Esophagus muscularis mucosa (tissue), 4 donors: ENCODE measurements at regions of chr1 and their contacts with region 1.

Region 1: GRCh38 chr1:221741711-221742554 is at the start of gene DUSP10:
- DNase-seq: peak; percentile 100
- H3K4me3 ChIP-seq: peak within 1 kb of the TSS; percentile 63 to 91 (median 70)
- H3K27ac ChIP-seq: peak within 1 kb of the TSS; percentile 93 to 99 (median 98)
- H3K4me1 ChIP-seq: peaks cover 20 to 50% (median 43%) of the 10 kb centered on the region in 4 donors
- H3K27me3 ChIP-seq: no peaks in the 10 kb centered on the region
- CTCF ChIP-seq: no peak
- EP300 ChIP-seq: no peak
- POLR2A ChIP-seq: peak; percentile 15
- total RNA-seq, gene DUSP10: 5.5 to 13.1 (median 8.6) TPM

Region 2: DNA sequence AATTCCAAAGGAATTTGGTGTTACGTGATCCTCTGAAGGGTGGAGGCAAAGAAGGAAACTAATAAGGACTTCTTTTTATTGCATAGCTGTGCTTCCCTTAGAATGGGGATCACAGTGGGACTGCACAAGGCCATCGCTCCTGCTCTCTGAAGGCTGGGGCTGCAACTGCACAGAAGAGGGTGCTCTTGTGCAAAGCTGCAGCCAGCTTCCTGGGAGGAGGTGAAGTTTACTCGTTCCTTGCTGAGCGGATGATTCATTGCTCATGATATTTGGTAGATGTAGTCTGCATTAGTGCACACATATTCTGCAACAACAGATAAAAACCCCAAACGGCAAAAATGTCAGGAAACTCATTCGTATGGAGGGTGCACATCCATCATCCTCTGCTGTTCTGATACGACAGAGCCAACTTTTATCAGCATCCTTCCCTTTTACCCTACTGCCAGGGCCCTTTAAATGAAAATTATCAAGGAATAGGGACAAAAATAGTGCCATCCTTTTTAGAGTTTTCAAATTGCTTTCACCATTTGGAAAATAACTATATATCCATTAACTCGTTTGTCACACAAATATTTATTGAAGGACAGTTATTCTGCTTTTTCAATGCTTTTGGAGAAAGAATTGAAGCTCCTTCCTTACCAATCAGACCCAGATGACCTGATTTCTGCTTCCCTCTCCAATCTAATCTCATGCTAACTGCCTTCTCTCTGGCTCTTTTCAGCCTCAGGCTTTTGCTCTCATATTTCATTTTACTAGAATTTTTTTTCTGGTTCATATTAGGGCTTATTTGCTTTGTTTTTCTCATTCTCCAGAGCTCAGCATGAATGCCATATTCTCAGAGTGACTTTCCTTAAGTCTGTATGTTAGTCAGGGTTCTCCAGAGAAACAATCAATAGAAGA is 263.6 kb before region 1 on chr1:
- intact Hi-C with region 1: loop called (anchors 10 kb)
- DNase-seq: no peak
- H3K4me3 ChIP-seq: no peak overlapping the region
- H3K27ac ChIP-seq: no peak overlapping the region
- H3K4me1 ChIP-seq: peaks cover 0 to 8% (median 5%) of the 10 kb centered on the region in 4 donors
- H3K27me3 ChIP-seq: no peaks in the 10 kb centered on the region
- CTCF ChIP-seq: peak; percentile 66 to 78 (median 73)
- EP300 ChIP-seq: no peak
- POLR2A ChIP-seq: no peak

Region 3: DNA sequence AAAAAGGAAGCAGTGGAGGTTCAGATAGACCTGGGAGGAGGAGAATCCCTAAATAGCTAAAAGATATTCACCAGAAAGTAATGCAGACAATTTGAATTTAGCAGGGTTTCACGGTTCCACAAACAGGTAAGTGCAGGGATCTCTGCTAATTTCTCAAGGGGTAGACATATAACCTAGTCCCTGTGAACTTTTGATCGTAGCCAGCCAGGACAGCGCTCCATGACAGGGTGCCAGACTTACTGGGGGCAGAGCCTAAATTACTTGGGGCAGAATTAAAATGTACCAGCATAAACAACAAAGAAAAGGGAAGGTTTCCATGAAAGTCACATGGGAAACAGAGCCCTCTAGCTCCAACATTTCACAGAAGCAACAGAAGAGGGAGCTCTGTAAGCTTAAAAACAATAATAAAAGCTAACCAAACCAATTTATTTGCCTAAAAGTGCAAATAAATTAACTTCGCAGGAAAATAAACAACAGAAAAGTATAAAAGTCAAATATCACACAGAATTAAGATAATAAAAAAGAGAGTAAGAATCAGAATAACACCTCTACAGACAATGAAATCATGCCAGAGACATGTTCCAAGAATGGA is 198.3 kb before region 1 on chr1:
- intact Hi-C with region 1: loop called (anchors 2 kb)
- DNase-seq: no peak
- H3K4me3 ChIP-seq: no peak overlapping the region
- H3K27ac ChIP-seq: no peak overlapping the region
- H3K4me1 ChIP-seq: peaks cover 0 to 18% (median 13%) of the 10 kb centered on the region in 4 donors
- H3K27me3 ChIP-seq: no peaks in the 10 kb centered on the region
- CTCF ChIP-seq: peak; percentile 50 to 65 (median 58)
- EP300 ChIP-seq: no peak
- POLR2A ChIP-seq: no peak

Region 4: GRCh38 chr1:221612264-221612777 is 129.6 kb before region 1 on chr1:
- intact Hi-C with region 1: loop called (anchors 10 kb)
- DNase-seq: no peak
- H3K4me3 ChIP-seq: no peak overlapping the region
- H3K27ac ChIP-seq: peak overlapping the region; percentile 54 to 72 (median 64)
- H3K4me1 ChIP-seq: peaks cover 7 to 17% (median 10%) of the 10 kb centered on the region in 4 donors
- H3K27me3 ChIP-seq: no peaks in the 10 kb centered on the region
- CTCF ChIP-seq: no peak
- EP300 ChIP-seq: no peak
- POLR2A ChIP-seq: no peak

Region 5: DNA sequence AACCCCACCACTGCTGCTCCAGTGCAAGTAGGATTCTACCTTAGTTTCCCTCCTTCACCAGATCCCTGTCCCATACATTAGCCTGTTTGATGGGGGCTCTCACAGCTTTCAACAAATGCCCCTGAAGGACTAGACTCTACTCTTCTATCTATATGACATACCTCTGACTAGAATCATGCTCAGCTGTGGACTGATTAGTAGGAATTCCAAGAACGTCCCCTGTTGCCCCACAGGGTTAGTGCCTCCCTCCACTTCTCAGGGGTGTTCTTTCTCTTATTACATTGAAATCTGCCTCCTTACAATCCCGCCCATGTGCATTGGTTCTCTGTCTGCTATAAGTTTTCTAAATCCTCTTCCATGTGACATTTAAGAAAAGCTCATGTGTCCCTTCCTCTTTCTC is 375.9 kb after region 1 on chr1:
- intact Hi-C with region 1: no loop called
- DNase-seq: no peak
- H3K4me3 ChIP-seq: no peak overlapping the region
- H3K27ac ChIP-seq: no peak overlapping the region
- H3K4me1 ChIP-seq: no peaks in the 10 kb centered on the region
- H3K27me3 ChIP-seq: no peaks in the 10 kb centered on the region
- CTCF ChIP-seq: no peak
- EP300 ChIP-seq: no peak
- POLR2A ChIP-seq: no peak